ENCODE measurements at regions of chr12 and their contacts with region 1.

Region 1: GRCh38 chr12:120175062-120175461 is 19.5 kb downstream of the GCN1 start:
- DNase-seq: no peak
- ATAC-seq: no peak
- H3K4me3 ChIP-seq: no peak overlapping the region
- H3K4me3 Mint-ChIP-seq: no peak overlapping the region
- H3K27ac ChIP-seq: no peak overlapping the region
- H3K27ac Mint-ChIP-seq: no peak overlapping the region
- H3K4me1 ChIP-seq: no peaks in the 10 kb centered on the region
- H3K4me1 Mint-ChIP-seq: no peaks in the 10 kb centered on the region
- H3K27me3 ChIP-seq: no peaks in the 10 kb centered on the region
- H3K27me3 Mint-ChIP-seq: no peaks in the 10 kb centered on the region
- CTCF ChIP-seq: no peak

Region 2: DNA sequence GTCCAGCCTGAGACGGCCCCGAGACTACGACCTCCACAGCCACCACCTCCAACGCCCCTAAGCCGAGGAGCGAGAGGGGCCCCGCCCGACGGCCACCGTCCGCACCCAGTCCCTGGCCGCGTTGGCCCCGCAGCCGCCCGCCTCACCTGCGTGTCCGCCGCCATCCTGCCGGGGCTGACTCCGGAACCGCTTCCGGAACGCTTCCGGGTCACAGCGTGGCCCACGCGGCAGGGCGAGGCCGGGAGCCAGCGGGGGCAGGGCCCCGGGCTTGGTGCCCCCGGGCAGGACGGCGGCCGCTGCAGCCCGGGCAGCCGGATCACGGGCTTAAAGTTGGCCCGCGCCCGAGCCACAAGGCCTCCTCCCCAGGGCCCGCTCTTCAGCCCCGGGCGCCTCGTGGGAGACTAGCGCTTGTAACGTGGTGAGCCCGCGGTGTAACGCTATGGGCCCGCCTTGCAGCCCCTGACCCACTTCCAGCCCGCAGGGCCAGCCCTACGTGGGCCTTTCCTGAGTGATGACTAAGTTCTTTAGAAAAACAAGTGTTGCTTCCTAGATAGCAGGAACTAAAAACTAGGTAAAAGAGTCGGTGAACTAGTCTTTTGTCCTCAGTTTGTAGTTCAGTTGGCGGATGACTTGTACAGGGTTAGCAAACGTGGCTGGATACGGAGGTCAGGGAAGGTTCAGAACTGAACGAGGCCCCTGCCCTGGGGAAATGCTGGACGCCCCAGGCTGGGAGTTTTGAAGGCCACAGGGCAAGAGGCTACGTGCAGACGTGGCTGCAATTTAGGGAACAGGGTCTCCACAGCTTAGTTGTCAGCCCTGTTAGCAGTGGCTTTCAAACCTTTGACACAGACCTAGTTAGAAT is 19.7 kb after region 1 on chr12 and contains the start of gene GCN1:
- intact Hi-C with region 1: loop called (anchors 2 kb)
- DNase-seq: peak; percentile 89 to 93
- ATAC-seq: peak; percentile 93 to 95 (median 93)
- H3K4me3 ChIP-seq: peak within 1 kb of the TSS; percentile 45
- H3K4me3 Mint-ChIP-seq: peak within 1 kb of the TSS; percentile 93
- H3K27ac ChIP-seq: peak within 1 kb of the TSS; percentile 75
- H3K27ac Mint-ChIP-seq: peak within 1 kb of the TSS; percentile 80 to 87
- H3K4me1 ChIP-seq: peaks cover 29% of the 10 kb centered on the region
- H3K4me1 Mint-ChIP-seq: peaks cover 12 to 25% of the 10 kb centered on the region in 2 donors
- H3K27me3 ChIP-seq: no peaks in the 10 kb centered on the region
- H3K27me3 Mint-ChIP-seq: no peaks in the 10 kb centered on the region
- CTCF ChIP-seq: no peak
- total RNA-seq, gene GCN1: 119 to 141 (median 120) TPM

Region 3: GRCh38 chr12:120352117-120352516 is 177.1 kb after region 1 on chr12:
- intact Hi-C with region 1: no loop called
- DNase-seq: no peak
- ATAC-seq: no peak
- H3K4me3 ChIP-seq: no peak overlapping the region
- H3K4me3 Mint-ChIP-seq: no peak overlapping the region
- H3K27ac ChIP-seq: no peak overlapping the region
- H3K27ac Mint-ChIP-seq: no peak overlapping the region
- H3K4me1 ChIP-seq: no peaks in the 10 kb centered on the region
- H3K4me1 Mint-ChIP-seq: no peaks in the 10 kb centered on the region
- H3K27me3 ChIP-seq: no peaks in the 10 kb centered on the region
- H3K27me3 Mint-ChIP-seq: no peaks in the 10 kb centered on the region
- CTCF ChIP-seq: no peak

Region 4: DNA sequence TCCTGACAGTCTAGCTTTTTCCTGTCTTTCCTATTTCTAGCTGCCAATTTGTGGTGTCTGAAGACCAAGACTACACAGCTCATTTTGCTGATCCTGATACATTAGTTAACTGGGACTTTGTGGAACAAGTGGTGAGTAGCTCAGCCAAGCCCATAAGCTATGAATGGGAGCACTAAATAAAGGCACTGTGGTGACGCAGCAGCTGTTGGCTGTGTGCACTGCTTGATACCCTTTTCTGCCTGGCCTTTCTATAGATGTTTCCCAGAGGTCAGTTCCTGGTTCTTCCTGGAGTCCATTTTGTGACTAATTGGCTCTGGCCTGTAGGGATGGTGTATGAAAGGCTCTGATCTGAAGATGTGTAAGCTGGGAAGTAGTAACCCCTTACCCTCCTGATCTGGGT is 379.6 kb after region 1 on chr12:
- intact Hi-C with region 1: no loop called
- DNase-seq: no peak
- ATAC-seq: no peak
- H3K4me3 ChIP-seq: no peak overlapping the region
- H3K4me3 Mint-ChIP-seq: no peak overlapping the region
- H3K27ac ChIP-seq: no peak overlapping the region
- H3K27ac Mint-ChIP-seq: no peak overlapping the region
- H3K4me1 ChIP-seq: peaks cover 3% of the 10 kb centered on the region
- H3K4me1 Mint-ChIP-seq: peaks cover 0 to 6% of the 10 kb centered on the region in 2 donors
- H3K27me3 ChIP-seq: no peaks in the 10 kb centered on the region
- H3K27me3 Mint-ChIP-seq: no peaks in the 10 kb centered on the region
- CTCF ChIP-seq: no peak